ENCODE measurements at regions of chr22 and their contacts with region 1.

Region 1: DNA sequence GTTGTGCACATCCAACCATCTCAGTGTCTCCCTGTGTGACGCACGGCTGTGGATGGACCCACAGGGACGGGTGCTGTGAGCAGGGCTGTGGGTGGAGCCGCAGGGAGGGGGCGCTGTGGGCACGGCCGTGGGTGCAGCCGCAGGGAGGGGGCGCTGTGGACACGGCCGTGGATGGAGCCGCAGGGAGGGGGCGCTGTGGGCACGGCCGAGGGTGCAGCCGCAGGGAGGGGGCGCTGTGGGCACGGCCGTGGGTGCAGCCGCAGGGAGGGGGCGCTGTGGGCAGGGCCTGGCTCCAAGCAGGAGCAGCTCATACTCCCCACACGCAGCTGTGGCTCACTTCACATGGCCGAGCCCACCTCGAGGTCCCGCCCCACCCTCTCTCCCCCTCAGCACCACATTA is 6.0 kb upstream of the MAPK11 start:
- DNase-seq: peak; percentile 86
- H3K4me3 ChIP-seq: no peak overlapping the region
- H3K27ac ChIP-seq: peak overlapping the region; percentile 40
- H3K4me1 ChIP-seq: peaks cover 16% of the 10 kb centered on the region
- CTCF ChIP-seq: peak; percentile 94

Region 2: DNA sequence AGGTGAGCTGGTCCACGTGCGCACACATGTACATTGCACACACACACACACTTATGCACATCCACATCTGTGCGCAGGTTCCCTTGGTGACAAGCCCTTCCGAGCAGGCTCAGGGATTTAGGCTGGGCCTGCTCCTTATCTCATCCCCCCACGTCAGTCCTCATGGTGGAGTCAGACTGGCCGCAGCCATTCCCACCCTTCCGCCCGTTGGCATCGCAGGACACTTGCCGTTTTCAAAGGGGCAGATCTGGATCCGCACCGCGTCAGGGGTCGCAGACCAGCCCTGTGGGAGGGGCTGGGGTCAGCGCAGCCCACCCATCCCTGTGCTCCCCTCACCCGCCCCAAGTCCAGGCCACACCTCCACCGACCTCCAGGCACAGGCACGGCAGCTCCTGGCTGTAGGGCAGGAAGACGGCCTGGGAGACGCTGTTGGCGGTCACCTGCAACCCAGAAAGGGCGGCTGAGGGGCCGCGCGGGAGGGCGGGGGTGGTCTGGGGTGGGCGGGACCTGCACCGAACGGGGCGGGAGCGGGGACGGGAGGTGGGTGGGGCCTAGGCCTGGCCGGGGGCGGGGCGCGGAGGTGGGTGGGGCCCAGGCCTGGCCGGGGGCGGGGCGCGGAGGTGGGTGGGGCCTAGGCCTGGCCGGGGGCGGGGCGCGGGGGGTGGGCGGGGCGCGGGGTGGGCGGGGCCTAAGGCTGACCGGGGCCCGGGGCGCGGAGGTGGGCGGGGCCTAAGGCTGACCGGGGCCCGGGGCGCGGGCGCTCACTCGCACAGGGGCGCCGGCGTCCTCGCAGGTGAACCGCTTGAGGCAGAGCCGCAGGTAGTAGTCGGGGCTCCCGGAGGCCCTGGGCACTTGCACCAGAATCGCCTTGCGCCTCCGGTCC is 276.8 kb before region 1 on chr22:
- CTCF ChIA-PET with region 1: no interaction called
- POLR2A ChIA-PET with region 1: no interaction called
- intact Hi-C with region 1: no loop called
- DNase-seq: no peak
- H3K4me3 ChIP-seq: no peak overlapping the region
- H3K27ac ChIP-seq: no peak overlapping the region
- H3K4me1 ChIP-seq: peaks cover 10% of the 10 kb centered on the region
- CTCF ChIP-seq: no peak

Region 3: DNA sequence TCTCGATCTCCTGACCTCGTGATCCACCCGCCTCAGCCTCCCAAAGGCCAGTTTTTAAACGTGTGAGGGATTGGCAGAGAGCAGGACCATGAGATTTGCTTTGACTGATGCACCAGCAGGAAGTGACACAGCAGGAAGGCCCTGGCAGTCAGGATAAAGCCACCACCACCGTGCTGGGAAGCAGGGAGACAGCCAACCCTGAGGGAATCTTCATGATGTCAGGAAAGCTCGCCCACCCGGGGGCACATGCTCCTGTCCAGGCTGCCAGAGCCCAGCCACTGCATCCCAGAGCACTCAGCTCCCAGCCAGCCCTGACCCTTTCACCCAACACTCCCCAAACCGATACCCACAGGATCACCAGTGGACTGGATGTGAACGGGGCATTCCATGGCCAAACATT is 37.4 kb before region 1 on chr22:
- CTCF ChIA-PET with region 1: no interaction called
- POLR2A ChIA-PET with region 1: no interaction called
- intact Hi-C with region 1: no loop called
- DNase-seq: no peak
- H3K4me3 ChIP-seq: no peak overlapping the region
- H3K27ac ChIP-seq: no peak overlapping the region
- H3K4me1 ChIP-seq: peaks cover 10% of the 10 kb centered on the region
- CTCF ChIP-seq: no peak

Region 4: GRCh38 chr22:50303848-50304527 is 27.8 kb after region 1 on chr22:
- CTCF ChIA-PET with region 1: interaction called, 13 read pairs
- POLR2A ChIA-PET with region 1: no interaction called
- intact Hi-C with region 1: no loop called
- DNase-seq: peak; percentile 38
- H3K4me3 ChIP-seq: no peak overlapping the region
- H3K27ac ChIP-seq: peak overlapping the region; percentile 27
- H3K4me1 ChIP-seq: peaks cover 95% of the 10 kb centered on the region
- CTCF ChIP-seq: peak; percentile 36; the same call in 1 of the 2 replicates

Region 5: DNA sequence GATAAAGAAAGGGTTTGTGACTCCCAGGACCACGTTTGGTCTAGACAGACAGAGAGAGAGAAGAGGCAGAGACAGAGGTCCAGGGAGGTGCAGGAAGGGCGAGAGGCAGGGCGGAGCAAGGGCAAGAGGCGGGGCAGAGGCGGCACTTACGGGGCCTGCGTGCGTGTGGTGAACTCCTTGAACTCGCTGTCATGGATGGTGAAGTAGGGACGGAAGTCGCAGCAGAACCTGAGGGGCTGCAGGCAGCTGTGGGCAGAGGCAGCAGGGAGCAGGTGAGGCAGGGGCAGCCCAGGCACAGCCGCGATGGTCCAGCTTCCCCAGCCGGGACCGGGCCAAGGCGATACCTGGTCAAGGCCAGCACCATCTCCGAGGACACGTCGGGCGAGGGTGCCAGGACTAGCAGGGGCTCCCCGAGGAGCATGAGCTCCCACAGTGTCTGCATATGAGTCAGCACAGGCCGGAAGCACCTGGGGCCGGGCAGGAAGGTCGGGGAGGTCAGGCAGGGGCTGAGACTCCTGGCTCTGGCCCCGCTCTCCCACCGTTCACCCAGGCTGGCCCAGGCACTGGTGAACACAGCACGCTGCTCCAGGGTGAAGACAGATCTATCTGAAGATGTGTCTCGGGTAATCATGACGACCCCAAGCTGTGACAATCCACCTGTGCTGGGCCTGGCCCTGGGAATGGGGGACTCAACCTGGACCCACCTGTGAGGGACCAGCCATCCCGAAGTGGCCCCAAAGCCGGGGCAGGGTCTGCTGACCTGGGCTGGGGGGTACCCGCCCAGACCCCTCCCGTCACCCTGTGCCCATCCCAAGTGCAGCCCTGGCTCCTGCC is 38.5 kb after region 1 on chr22:
- CTCF ChIA-PET with region 1: interaction called, 10 read pairs
- POLR2A ChIA-PET with region 1: interaction called, 4 read pairs
- intact Hi-C with region 1: loop called (anchors 2 kb)
- DNase-seq: peak; percentile 93
- H3K4me3 ChIP-seq: peak overlapping the region; percentile 71
- H3K27ac ChIP-seq: peak overlapping the region; percentile 91
- H3K4me1 ChIP-seq: peaks cover 64% of the 10 kb centered on the region
- CTCF ChIP-seq: no peak

Region 6: DNA sequence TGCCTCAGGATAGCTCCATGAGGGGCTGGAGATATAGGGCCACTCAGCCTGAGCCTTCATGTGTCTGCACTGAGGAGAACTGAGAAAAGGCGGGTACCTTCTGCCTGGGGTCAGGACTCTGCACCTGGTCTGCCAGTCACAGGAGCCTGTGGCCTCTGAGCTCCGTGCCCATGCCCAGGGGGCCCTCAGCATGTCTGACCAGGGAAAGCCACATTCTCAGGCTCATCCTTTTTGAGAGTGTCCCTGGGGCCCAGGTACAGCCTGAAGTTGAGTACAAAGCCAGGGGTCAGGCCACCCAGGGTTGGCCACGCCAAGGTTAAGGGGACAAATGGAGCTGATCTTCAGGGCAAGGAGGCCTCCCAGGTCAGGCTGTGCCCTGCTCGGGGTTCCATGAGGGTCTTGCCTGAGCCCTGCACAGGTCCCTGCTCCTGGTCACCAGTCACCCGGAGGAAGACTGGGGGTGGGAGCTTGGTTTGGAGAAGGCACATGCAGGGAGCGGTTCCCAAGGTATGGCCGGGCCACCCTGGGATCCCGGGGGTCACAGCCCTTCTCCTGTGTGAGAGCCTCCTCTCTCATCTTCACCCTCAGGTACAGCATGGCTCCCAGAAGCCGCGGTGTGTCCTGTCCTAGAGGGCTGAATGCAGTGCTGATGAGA is 44.7 kb after region 1 on chr22:
- CTCF ChIA-PET with region 1: interaction called, 20 read pairs
- POLR2A ChIA-PET with region 1: interaction called, 4 read pairs
- intact Hi-C with region 1: loop called (anchors 2 kb)
- DNase-seq: no peak
- H3K4me3 ChIP-seq: no peak overlapping the region
- H3K27ac ChIP-seq: no peak overlapping the region
- H3K4me1 ChIP-seq: peaks cover 56% of the 10 kb centered on the region
- CTCF ChIP-seq: no peak

Region 7: GRCh38 chr22:50326959-50327710 is 51.0 kb after region 1 on chr22 and contains the start of gene DENND6B:
- CTCF ChIA-PET with region 1: interaction called, 20 read pairs
- POLR2A ChIA-PET with region 1: interaction called, 4 read pairs
- intact Hi-C with region 1: loop called (anchors 2 kb)
- DNase-seq: peak; percentile 87
- H3K4me3 ChIP-seq: peak within 1 kb of the TSS; percentile 77
- H3K27ac ChIP-seq: peak within 1 kb of the TSS; percentile 33
- H3K4me1 ChIP-seq: peaks cover 33% of the 10 kb centered on the region
- CTCF ChIP-seq: peak; percentile 54
- total RNA-seq, gene DENND6B: 25.0 and 31.6 TPM in 2 replicates

Region 8: DNA sequence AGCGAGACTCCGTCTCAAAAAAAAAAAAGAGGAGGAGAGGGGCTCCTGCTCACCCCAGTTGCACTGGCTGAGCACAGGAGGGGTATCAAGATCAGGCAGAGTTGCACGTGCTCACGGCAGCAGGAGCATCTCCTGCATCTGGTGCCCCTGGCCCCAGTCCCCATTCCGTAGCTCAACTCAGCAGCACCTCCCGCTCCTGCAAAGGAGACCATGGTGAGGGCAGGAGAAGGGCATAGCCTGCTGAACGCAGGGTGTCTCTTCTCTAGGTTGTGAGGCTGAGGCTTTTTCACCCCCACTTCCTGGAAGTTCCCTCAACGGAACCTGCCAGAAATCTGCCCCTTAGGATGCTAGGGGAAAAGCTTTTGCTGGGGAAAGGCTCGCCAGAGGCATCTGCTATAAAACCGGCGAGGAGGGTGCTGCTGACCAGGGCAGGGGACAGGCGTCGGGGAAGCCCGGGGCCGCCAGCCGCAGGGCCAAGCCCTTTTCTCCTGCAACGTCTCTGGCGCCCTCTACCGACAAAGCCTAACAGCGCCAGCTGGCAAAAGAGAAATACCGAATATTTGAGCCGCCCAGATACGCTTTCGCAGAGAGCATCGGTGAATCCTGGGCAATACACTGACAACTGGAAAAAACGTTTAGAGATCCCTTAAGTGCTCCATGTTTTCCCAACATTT is 66.0 kb after region 1 on chr22:
- CTCF ChIA-PET with region 1: interaction called, 4 read pairs
- POLR2A ChIA-PET with region 1: no interaction called
- intact Hi-C with region 1: loop called (anchors 1 kb)
- DNase-seq: peak; percentile 88
- H3K4me3 ChIP-seq: peak overlapping the region; percentile 100
- H3K27ac ChIP-seq: peak overlapping the region; percentile 72
- H3K4me1 ChIP-seq: peaks cover 20% of the 10 kb centered on the region
- CTCF ChIP-seq: peak; percentile 99

Region 9: DNA sequence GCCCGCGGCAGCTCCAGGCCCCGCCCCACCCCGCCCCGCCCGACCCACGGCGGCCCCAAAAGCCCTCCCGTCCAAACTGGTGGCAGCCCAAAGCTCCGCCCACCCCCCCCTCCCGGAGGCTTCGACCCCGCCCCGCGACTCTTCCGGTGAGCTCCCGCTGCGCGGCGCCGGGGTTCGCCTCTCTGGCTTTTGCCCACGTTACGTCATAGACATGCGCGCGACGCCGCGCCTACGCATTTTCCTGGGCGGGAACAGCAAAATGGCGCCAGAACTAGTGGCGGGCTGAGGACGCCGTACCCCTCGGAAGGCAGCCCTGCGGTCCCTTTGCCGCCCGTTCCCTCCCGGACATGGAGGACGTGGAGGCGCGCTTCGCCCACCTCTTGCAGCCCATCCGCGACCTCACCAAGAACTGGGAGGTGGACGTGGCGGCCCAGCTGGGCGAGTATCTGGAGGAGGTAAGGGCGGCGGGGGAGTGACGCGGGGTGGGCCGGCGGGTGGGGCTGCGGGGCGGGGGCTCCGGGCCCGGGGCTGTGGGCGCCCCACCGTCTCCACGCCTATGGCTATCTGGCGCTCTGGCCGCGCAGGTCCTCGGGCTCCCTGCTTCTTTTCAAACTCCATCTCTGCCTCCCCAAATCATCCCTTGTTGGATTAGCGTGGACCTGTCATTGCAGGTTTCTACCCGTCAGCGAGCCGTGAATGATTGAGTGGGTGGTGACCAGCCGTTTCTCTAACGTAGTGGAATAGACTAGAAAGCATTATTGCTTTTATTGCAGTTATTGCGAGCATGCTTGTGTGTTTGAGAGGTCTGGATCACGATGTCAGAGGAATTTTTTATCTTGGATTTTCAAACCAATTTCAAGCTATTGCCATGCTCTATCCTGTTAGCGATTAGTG is 232.1 kb after region 1 on chr22 and contains the start of gene NCAPH2:
- CTCF ChIA-PET with region 1: no interaction called
- POLR2A ChIA-PET with region 1: no interaction called
- intact Hi-C with region 1: loop called (anchors 5 kb)
- DNase-seq: peak; percentile 99
- H3K4me3 ChIP-seq: peak within 1 kb of the TSS; percentile 100
- H3K27ac ChIP-seq: peak within 1 kb of the TSS; percentile 59
- H3K4me1 ChIP-seq: peaks cover 27% of the 10 kb centered on the region
- CTCF ChIP-seq: no peak
- total RNA-seq, gene NCAPH2: 129 and 151 TPM in 2 replicates

Region 10: GRCh38 chr22:50641696-50642607 is 365.8 kb after region 1 on chr22:
- CTCF ChIA-PET with region 1: no interaction called
- POLR2A ChIA-PET with region 1: no interaction called
- intact Hi-C with region 1: no loop called
- DNase-seq: peak; percentile 37
- H3K4me3 ChIP-seq: no peak overlapping the region
- H3K27ac ChIP-seq: no peak overlapping the region
- H3K4me1 ChIP-seq: no peaks in the 10 kb centered on the region
- CTCF ChIP-seq: no peak; the same call in 1 of the 2 replicates

Measured in OCI-LY7 (cell line).